Right ventricle myocardium inferior (tissue), 1 donor: ENCODE measurements at regions of chr2 and their contacts with region 1.

Region 1: GRCh38 chr2:144477957-144478311 is 42.0 kb downstream of the ZEB2 start:
- DNase-seq: no peak
- ATAC-seq: no peak

Region 2: DNA sequence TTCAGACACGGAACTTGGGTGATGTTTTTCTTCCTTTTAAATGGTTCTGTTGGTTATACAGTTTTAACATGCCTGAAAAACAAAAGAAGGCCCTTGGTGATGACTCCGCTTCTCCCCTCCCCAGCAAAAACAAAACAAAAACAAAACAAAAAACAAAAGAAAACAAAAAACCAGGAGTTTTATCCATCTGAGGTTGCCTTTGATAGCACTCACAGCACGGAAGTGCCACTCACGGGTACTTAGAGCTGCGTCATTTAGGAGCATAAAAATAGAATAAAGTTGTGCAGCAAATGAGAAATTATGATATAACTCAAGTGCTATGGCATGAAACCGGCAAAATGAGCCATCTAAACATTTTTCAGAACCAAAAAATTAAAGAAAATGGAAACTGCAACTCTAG is 15.7 kb before region 1 on chr2:
- intact Hi-C with region 1: loop called (anchors 2 kb)
- DNase-seq: no peak
- ATAC-seq: no peak